Heart left ventricle (tissue), 16 donors: ENCODE measurements at regions of chr18 and their contacts with region 1.

Region 1: GRCh38 chr18:47175908-47176575 is at the start of gene IER3IP1:
- DNase-seq: peak; percentile 93 to 95 (median 94)
- ATAC-seq: peak; percentile 92 to 99 (median 98)
- H3K4me3 ChIP-seq: peak within 1 kb of the TSS; percentile 74 to 99 (median 88)
- H3K27ac ChIP-seq: peak within 1 kb of the TSS in 11 of 12 donors; percentile 81 to 90 (median 88)
- H3K4me1 ChIP-seq: peaks cover 3 to 34% (median 16%) of the 10 kb centered on the region in 12 donors
- H3K27me3 ChIP-seq: no peaks in the 10 kb centered on the region
- CTCF ChIP-seq: peak in 6 of 12 donors; percentile 11 to 42 (median 26)
- POLR2A ChIP-seq: peak in 1 of 2 donors; percentile 71
- total RNA-seq, gene IER3IP1: 6.9 to 11.5 (median 10.2) TPM

Region 2: GRCh38 chr18:47040982-47041381 is 135.1 kb before region 1 on chr18:
- intact Hi-C with region 1: no loop called
- DNase-seq: no peak
- ATAC-seq: no peak
- H3K4me3 ChIP-seq: no peak overlapping the region
- H3K27ac ChIP-seq: no peak overlapping the region
- H3K4me1 ChIP-seq: no peaks in the 10 kb centered on the region
- H3K27me3 ChIP-seq: no peaks in the 10 kb centered on the region
- CTCF ChIP-seq: no peak
- POLR2A ChIP-seq: no peak

Region 3: GRCh38 chr18:47143899-47144485 is 32.0 kb before region 1 on chr18:
- intact Hi-C with region 1: loop called in 1 of 10 experiments (anchors 5 kb)
- DNase-seq: no peak
- ATAC-seq: peak in 3 of 4 donors; percentile 69 to 76 (median 74)
- H3K4me3 ChIP-seq: no peak overlapping the region
- H3K27ac ChIP-seq: peak overlapping the region in 3 of 12 donors; percentile 10 to 37 (median 25)
- H3K4me1 ChIP-seq: peaks cover 0 to 41% (median 18%) of the 10 kb centered on the region in 12 donors
- H3K27me3 ChIP-seq: no peaks in the 10 kb centered on the region
- CTCF ChIP-seq: no peak
- POLR2A ChIP-seq: no peak

Region 4: GRCh38 chr18:47150029-47150823 is 25.8 kb before region 1 on chr18 and contains the start of gene HDHD2:
- intact Hi-C with region 1: loop called in 1 of 10 experiments (anchors 2 kb)
- DNase-seq: peak; percentile 88 to 95 (median 90)
- ATAC-seq: peak; percentile 93 to 98 (median 96)
- H3K4me3 ChIP-seq: peak within 1 kb of the TSS; percentile 29 to 89 (median 73)
- H3K27ac ChIP-seq: peak within 1 kb of the TSS; percentile 87 to 98 (median 94)
- H3K4me1 ChIP-seq: peaks cover 3 to 42% (median 20%) of the 10 kb centered on the region in 12 donors
- H3K27me3 ChIP-seq: no peaks in the 10 kb centered on the region
- CTCF ChIP-seq: peak in 4 of 12 donors; percentile 7 to 15 (median 10)
- POLR2A ChIP-seq: peak in 1 of 2 donors; percentile 79
- total RNA-seq, gene HDHD2: 16.8 to 50.8 (median 40.6) TPM

Region 5: GRCh38 chr18:47191961-47192360 is 15.9 kb after region 1 on chr18:
- intact Hi-C with region 1: no loop called
- DNase-seq: no peak
- ATAC-seq: no peak
- H3K4me3 ChIP-seq: no peak overlapping the region
- H3K27ac ChIP-seq: no peak overlapping the region
- H3K4me1 ChIP-seq: no peaks in the 10 kb centered on the region
- H3K27me3 ChIP-seq: peaks cover 0 to 29% (median 0%) of the 10 kb centered on the region in 9 donors
- CTCF ChIP-seq: no peak
- POLR2A ChIP-seq: no peak

Region 6: DNA sequence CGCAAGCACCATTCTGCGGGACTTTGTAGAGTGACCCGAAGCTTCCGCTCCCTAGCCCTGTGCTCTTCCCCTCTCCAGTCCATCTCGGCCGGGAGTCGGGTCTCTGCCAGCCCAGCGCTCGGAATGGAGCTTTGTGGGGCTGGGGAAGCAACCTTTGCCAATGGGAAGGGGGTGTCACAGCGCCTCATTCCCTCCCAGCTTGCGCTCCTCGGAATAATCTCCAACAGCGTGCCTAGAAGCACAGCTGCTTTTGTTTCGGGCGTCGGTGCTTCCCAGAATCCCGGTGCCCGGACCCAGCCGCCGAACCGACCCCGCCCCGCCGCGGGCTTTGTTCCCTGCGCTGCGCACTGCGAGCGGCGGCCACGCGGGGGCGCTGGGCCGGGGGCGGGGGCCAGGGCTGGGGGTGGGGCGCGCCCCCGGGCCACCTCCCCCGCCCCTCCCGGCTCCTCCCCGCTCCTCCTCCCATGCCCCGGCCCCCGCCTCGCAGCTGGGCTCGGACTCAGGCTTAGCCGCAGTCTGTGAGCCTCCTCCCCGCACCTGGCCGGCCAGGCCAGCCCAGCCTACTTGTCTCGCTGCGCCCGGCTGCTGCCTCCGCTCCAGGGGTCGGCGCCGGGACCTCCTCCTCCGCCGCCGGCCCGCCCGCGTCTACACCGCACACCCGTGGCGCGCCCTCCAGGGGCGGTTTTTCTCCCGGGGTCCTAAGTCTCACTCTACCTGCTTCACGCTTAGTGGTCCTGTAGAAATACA is 832.1 kb after region 1 on chr18:
- intact Hi-C with region 1: loop called in 1 of 10 experiments (anchors 10 kb)
- DNase-seq: peak; percentile 67 to 78 (median 76)
- ATAC-seq: peak; percentile 50 to 90 (median 72)
- H3K4me3 ChIP-seq: peak overlapping the region; percentile 38 to 73 (median 58)
- H3K27ac ChIP-seq: peak overlapping the region in 7 of 12 donors; percentile 25 to 77 (median 53)
- H3K4me1 ChIP-seq: peaks cover 0 to 28% (median 11%) of the 10 kb centered on the region in 12 donors
- H3K27me3 ChIP-seq: no peaks in the 10 kb centered on the region
- CTCF ChIP-seq: peak; percentile 29 to 96 (median 74)
- POLR2A ChIP-seq: no peak